Colonic mucosa (tissue), 4 donors: ENCODE measurements at regions of chr9 and their contacts with region 1.

Region 1: DNA sequence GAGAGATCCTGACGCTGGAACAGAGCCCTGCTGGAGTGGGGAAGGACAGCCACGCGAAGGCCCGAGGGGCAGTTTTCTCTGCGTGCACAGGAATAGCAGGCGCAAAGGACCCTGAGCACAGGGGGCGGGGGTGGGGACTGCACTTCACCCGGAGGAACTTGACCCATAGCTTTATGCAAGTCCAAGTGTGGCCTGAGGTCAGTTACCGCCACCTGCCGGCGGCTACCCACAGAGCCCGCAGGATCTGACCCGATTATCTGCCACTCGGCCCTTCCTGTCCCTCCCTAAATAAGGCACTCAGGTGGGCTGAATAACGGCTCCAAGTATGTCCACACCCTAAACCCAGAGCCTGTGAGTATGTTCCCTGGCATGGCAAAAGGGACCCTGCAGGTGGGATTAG is 65.4 kb upstream of the FCN1 start:
- DNase-seq: no peak
- H3K4me3 ChIP-seq: no peak overlapping the region
- H3K27ac ChIP-seq: no peak overlapping the region
- H3K4me1 ChIP-seq: no peaks in the 10 kb centered on the region
- H3K27me3 ChIP-seq: no peaks in the 10 kb centered on the region
- CTCF ChIP-seq: no peak

Region 2: GRCh38 chr9:134781591-134782294 is 201.3 kb before region 1 on chr9:
- intact Hi-C with region 1: loop called (anchors 10 kb)
- DNase-seq: no peak
- H3K4me3 ChIP-seq: no peak overlapping the region
- H3K27ac ChIP-seq: no peak overlapping the region
- H3K4me1 ChIP-seq: no peaks in the 10 kb centered on the region
- H3K27me3 ChIP-seq: no peaks in the 10 kb centered on the region
- CTCF ChIP-seq: no peak